PC-3 (cell line): ENCODE measurements at regions of chr1 and their contacts with region 1.

Region 1: GRCh38 chr1:225777583-225778336 is at the start of gene SRP9:
- DNase-seq: peak; percentile 100
- ATAC-seq: peak; percentile 92
- H3K4me3 ChIP-seq: peak within 1 kb of the TSS; percentile 78
- H3K27ac ChIP-seq: peak within 1 kb of the TSS; percentile 84
- H3K4me1 ChIP-seq: peaks cover 46% of the 10 kb centered on the region
- H3K27me3 ChIP-seq: no peaks in the 10 kb centered on the region
- CTCF ChIP-seq: peak; percentile 94
- total RNA-seq, gene SRP9: 241 and 306 TPM in 2 replicates

Region 2: GRCh38 chr1:225617479-225617878 is 160.3 kb before region 1 on chr1:
- CTCF ChIA-PET with region 1: interaction called, 3 read pairs
- POLR2A ChIA-PET with region 1: interaction called, 16 read pairs
- intact Hi-C with region 1: no loop called
- DNase-seq: peak; percentile 49
- ATAC-seq: peak; percentile 86
- H3K4me3 ChIP-seq: no peak overlapping the region
- H3K27ac ChIP-seq: peak overlapping the region; percentile 10
- H3K4me1 ChIP-seq: peaks cover 18% of the 10 kb centered on the region
- H3K27me3 ChIP-seq: no peaks in the 10 kb centered on the region
- CTCF ChIP-seq: no peak

Region 3: DNA sequence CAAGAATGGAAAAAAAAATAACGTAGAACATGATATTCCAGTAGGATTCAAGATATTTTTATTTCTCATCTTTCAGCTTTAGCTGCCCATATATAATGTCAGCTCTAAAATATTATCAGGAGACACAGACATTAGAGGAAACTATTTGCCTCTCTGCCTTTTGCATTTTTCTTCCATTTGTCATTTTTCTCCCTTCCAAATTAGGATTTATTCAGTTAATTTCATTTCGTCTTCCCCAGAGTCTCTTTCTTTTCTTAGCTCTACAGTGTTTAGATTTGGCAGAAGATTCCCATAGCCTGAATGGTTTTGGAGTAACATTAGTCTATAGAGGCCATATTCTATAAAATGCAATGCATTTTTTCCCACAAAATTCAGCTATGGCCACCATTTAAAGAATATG is 119.7 kb before region 1 on chr1:
- CTCF ChIA-PET with region 1: interaction called, 11 read pairs
- POLR2A ChIA-PET with region 1: interaction called, 23 read pairs
- intact Hi-C with region 1: loop called (anchors 1 kb)
- DNase-seq: no peak
- ATAC-seq: no peak
- H3K4me3 ChIP-seq: peak overlapping the region; percentile 8; the same call in 1 of the 2 replicates
- H3K27ac ChIP-seq: no peak overlapping the region; the same call in 1 of the 2 replicates
- H3K4me1 ChIP-seq: peaks cover 40% of the 10 kb centered on the region
- H3K27me3 ChIP-seq: no peaks in the 10 kb centered on the region
- CTCF ChIP-seq: no peak

Region 4: GRCh38 chr1:225834417-225835329 is 56.9 kb after region 1 on chr1:
- CTCF ChIA-PET with region 1: interaction called, 11 read pairs
- POLR2A ChIA-PET with region 1: no interaction called
- intact Hi-C with region 1: no loop called
- DNase-seq: no peak
- ATAC-seq: peak; percentile 55
- H3K4me3 ChIP-seq: no peak overlapping the region
- H3K27ac ChIP-seq: no peak overlapping the region
- H3K4me1 ChIP-seq: no peaks in the 10 kb centered on the region
- H3K27me3 ChIP-seq: no peaks in the 10 kb centered on the region
- CTCF ChIP-seq: no peak

Region 5: DNA sequence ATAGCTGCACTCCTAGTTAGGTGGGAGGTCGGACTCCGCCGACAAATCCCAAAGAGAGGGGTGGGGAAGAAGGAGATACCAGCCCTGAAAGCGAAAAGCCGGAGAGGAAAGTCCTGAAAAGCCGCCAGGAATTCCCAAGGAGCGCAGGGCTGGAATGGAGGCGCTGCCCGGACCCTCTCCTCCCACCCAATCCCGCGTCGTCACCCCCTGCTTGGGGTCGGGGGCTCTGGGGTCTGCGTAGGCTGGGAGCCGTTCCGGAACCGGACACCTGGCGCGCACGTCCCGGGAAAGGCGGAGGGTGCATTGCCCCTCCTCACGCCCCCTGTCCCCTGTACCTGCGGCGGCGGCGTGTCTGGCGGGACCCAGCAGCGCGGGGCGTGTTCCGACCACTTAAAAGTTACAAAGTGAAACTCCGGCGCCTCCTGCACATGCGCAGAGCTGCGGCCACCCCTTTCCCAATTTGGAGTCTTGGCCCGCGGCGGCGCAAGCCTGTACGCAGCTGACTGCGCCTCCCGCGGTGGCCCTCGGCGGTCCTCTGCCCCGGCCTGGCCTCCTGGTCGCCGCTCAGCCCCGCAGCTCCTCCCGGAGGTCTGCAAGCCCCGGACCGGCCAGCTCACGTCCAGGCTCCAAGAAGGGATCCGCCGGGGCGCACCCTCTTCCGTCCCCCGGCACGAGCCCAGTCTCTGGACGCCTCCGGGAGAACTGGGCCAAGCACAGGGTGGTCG is 104.4 kb after region 1 on chr1 and contains the start of gene TMEM63A:
- CTCF ChIA-PET with region 1: no interaction called
- POLR2A ChIA-PET with region 1: interaction called, 6 read pairs
- intact Hi-C with region 1: loop called (anchors 5 kb)
- DNase-seq: peak; percentile 95
- ATAC-seq: peak; percentile 60
- H3K4me3 ChIP-seq: peak within 1 kb of the TSS; percentile 96
- H3K27ac ChIP-seq: peak within 1 kb of the TSS; percentile 98
- H3K4me1 ChIP-seq: peaks cover 63% of the 10 kb centered on the region
- H3K27me3 ChIP-seq: no peaks in the 10 kb centered on the region
- CTCF ChIP-seq: peak; percentile 46
- total RNA-seq, gene TMEM63A: 47.5 and 59.3 TPM in 2 replicates